ENCODE measurements at regions of chr11 and their contacts with region 1.

Region 1: GRCh38 chr11:71251761-71252443 is 475 bp downstream of the SHANK2 start:
- DNase-seq: no peak
- ATAC-seq: peak; percentile 42
- H3K4me3 ChIP-seq: peak overlapping the region; percentile 62
- H3K27ac ChIP-seq: peak overlapping the region; percentile 72
- H3K4me1 ChIP-seq: peaks cover 7% of the 10 kb centered on the region
- H3K27me3 ChIP-seq: peaks cover 4% of the 10 kb centered on the region; the same call in 1 of the 2 replicates
- CTCF ChIP-seq: peak; percentile 40
- POLR2A ChIP-seq: no peak
- RAD21 ChIP-seq: no peak; the same call in 1 of the 2 replicates

Region 2: DNA sequence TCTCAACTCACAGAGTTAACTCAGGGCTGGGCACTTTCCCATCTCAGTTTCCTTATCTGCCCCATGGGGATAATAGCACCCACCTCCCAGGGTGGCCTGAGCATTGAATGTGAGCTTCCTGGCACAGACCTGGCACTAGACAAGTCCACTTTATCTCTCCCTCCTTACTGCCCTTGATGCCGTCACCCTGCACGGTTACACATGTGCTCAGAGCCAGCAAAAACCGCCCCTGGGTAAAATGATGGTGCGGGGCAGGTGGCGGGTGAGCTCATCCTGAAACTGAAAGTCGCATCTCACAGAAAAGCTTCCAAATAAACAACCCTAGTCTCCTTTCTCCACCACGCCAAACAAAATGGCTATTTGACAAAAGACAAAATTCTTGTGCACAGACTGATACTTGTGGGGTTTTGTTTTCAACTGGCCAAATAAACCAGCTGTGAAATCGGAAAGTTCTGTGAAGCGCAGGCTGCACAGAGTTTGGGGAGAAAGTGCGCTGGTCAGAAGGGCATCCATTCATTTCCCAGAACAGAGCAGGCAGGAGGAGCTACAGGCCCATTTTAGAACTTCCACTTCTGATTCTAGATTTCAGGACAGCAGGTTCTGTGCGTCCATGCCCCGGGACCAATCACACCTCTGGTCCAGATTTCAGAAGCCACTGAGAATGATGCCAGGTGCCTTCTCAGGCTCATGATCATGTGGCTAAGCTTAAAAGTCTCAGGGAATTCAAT is 137.6 kb before region 1 on chr11:
- CTCF ChIA-PET with region 1: no interaction called
- POLR2A ChIA-PET with region 1: no interaction called
- dilution Hi-C with region 1: no loop called
- in situ Hi-C with region 1: no loop called
- intact Hi-C with region 1: loop called (anchors 10 kb)
- DNase-seq: no peak
- ATAC-seq: no peak
- H3K4me3 ChIP-seq: no peak overlapping the region
- H3K27ac ChIP-seq: no peak overlapping the region
- H3K4me1 ChIP-seq: no peaks in the 10 kb centered on the region
- H3K27me3 ChIP-seq: no peaks in the 10 kb centered on the region
- CTCF ChIP-seq: no peak
- POLR2A ChIP-seq: no peak
- RAD21 ChIP-seq: no peak

Region 3: GRCh38 chr11:71199216-71199820 is 52.6 kb before region 1 on chr11:
- CTCF ChIA-PET with region 1: no interaction called
- POLR2A ChIA-PET with region 1: no interaction called
- dilution Hi-C with region 1: no loop called
- in situ Hi-C with region 1: no loop called
- intact Hi-C with region 1: no loop called
- DNase-seq: no peak
- ATAC-seq: no peak
- H3K4me3 ChIP-seq: no peak overlapping the region
- H3K27ac ChIP-seq: no peak overlapping the region
- H3K4me1 ChIP-seq: peaks cover 3% of the 10 kb centered on the region; the same call in 1 of the 2 replicates
- H3K27me3 ChIP-seq: no peaks in the 10 kb centered on the region
- CTCF ChIP-seq: no peak
- POLR2A ChIP-seq: no peak
- RAD21 ChIP-seq: no peak

Region 4: GRCh38 chr11:71286701-71287643 is 35.1 kb after region 1 on chr11:
- CTCF ChIA-PET with region 1: interaction called, 3 read pairs
- POLR2A ChIA-PET with region 1: no interaction called
- dilution Hi-C with region 1: no loop called
- in situ Hi-C with region 1: no loop called
- intact Hi-C with region 1: loop called (anchors 1 kb)
- DNase-seq: peak; percentile 92
- ATAC-seq: peak; percentile 91
- H3K4me3 ChIP-seq: no peak overlapping the region
- H3K27ac ChIP-seq: peak overlapping the region; percentile 63
- H3K4me1 ChIP-seq: peaks cover 5% of the 10 kb centered on the region
- H3K27me3 ChIP-seq: peaks cover 6% of the 10 kb centered on the region; the same call in 1 of the 2 replicates
- CTCF ChIP-seq: no peak
- POLR2A ChIP-seq: no peak
- RAD21 ChIP-seq: peak; percentile 1; the same call in 1 of the 2 replicates

Region 5: DNA sequence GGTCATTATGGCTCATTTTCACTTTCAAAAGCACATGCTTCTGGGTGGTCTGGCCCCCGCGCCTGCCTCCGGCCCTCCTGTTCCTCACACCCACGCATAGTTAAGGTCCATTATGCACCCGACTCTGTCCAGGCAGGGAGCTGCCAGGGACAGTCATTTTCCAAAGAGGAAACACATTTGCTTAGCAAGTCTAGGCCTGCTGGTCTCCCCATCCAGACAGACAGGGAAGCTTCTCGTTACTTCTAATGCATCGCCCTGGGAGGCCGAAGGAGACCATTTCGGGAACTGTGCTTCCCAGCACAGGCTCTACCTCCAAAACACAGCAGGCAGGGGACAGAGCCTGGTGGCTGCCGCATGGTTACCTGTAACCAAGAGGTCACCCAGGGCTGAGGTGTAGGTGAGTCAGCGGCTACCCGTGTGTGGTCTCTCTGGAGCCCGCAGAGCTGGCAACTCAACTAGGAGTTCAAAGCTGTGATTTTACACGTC is 87.5 kb after region 1 on chr11:
- CTCF ChIA-PET with region 1: interaction called, 6 read pairs
- POLR2A ChIA-PET with region 1: no interaction called
- dilution Hi-C with region 1: no loop called
- in situ Hi-C with region 1: no loop called
- intact Hi-C with region 1: loop called (anchors 5 kb)
- DNase-seq: no peak
- ATAC-seq: peak; percentile 4
- H3K4me3 ChIP-seq: no peak overlapping the region
- H3K27ac ChIP-seq: peak overlapping the region; percentile 83
- H3K4me1 ChIP-seq: peaks cover 30% of the 10 kb centered on the region
- H3K27me3 ChIP-seq: peaks cover 22% of the 10 kb centered on the region
- CTCF ChIP-seq: no peak
- POLR2A ChIP-seq: no peak
- RAD21 ChIP-seq: no peak

Region 6: DNA sequence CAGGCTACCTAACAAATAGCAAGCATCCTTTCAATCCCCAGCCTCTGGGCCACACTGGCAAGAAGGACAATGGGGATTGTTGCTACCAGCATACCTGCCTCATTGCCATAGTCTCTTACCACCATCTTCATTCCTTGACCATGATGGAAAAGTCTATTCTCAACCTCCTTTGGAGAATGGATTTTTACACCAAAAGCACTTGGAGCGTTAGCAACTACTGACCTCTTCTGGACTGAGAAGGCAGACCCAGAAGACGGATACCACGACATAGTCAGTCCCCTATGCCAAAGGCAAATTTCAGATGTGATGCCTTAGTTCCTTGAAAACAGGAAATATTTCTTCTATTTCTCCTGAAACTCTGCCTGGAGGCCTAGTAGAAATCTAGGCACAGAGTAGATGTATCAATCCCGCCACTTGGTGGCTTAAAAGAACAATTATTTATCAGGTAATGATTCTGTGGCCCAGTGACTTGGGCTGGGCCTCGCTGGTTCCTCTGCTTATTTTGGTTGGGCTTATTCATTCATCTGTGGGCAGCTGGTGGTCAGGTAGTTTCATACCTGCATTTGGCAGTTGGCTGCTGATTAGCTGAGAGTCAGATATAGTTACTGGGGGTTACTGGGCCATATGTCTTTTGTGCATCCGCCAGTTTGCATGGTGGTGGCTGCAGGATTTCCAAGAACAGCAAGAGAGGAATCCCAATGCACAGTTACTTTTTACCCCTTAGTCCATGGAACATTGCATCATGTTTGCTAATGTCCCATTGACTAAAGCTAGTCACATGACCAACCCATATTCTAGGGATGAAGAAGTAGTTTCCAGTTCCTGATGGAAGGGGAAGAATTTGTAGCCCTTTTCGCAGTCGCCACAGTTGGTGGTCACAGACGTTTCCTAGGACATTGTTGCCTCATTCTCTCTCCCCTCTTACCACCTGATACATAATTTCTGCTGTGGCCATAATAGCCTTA is 121.1 kb after region 1 on chr11:
- CTCF ChIA-PET with region 1: interaction called, 3 read pairs
- POLR2A ChIA-PET with region 1: no interaction called
- dilution Hi-C with region 1: no loop called
- in situ Hi-C with region 1: no loop called
- intact Hi-C with region 1: loop called (anchors 2 kb)
- DNase-seq: peak; percentile 50
- ATAC-seq: peak; percentile 89
- H3K4me3 ChIP-seq: no peak overlapping the region
- H3K27ac ChIP-seq: no peak overlapping the region
- H3K4me1 ChIP-seq: no peaks in the 10 kb centered on the region
- H3K27me3 ChIP-seq: peaks cover 25% of the 10 kb centered on the region
- CTCF ChIP-seq: peak; percentile 65
- POLR2A ChIP-seq: no peak
- RAD21 ChIP-seq: peak; percentile 82